ENCODE measurements at regions of chr6 and their contacts with region 1.

Region 1: DNA sequence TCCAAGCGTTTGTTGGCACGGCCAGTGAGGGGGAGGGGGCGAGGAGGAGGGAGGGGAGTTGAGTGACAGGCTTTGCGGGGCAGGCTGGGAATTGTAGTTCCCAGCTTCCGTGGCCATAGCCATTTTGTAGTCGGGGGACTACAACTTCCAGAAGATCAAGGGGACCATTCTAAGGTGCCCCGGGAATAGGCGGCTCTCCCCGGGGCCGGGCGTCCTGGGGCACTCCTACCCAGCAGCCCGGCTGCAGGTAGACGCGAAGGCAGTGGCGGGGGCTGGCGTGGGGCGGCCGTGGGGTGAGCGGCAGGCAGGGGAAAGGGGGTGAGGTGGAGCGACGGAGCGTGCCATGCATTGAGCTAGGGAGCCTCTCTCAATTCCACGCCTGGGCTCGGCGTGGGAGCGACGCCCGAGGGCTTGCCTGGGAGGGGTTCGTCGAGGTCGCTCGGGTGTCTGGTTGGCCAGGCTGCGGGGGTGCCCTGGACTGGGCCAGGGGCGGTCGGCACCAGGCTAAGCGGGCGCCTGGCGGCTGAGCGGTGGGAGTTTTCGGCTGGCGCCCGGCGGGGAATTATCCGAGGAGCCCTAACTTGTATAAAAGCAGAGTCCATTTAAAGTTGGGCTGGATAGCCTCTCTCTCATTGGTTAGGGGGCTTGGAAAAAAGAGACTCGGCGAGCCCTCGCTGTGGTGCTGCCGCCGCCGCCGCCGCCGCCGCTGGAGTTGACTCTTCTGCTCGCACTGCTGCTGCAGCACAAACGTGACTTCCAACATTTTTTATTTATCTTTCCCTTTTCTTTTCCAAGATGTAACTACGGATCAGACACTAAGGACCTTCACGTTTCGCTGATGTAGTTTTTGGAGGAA is at the start of gene JARID2:
- DNase-seq: peak; percentile 99 to 100 (median 99)
- ATAC-seq: peak; percentile 81 to 91 (median 90)
- H3K4me3 ChIP-seq: peak within 1 kb of the TSS; percentile 54 to 92 (median 82)
- H3K27ac ChIP-seq: peak within 1 kb of the TSS; percentile 76 to 98 (median 95)
- H3K4me1 ChIP-seq: peaks cover 0 to 38% (median 12%) of the 10 kb centered on the region in 12 donors
- H3K27me3 ChIP-seq: no peaks in the 10 kb centered on the region
- CTCF ChIP-seq: no peak
- POLR2A ChIP-seq: peak; percentile 74 to 95
- total RNA-seq, gene JARID2: 6.0 to 12.2 (median 8.5) TPM

Region 2: DNA sequence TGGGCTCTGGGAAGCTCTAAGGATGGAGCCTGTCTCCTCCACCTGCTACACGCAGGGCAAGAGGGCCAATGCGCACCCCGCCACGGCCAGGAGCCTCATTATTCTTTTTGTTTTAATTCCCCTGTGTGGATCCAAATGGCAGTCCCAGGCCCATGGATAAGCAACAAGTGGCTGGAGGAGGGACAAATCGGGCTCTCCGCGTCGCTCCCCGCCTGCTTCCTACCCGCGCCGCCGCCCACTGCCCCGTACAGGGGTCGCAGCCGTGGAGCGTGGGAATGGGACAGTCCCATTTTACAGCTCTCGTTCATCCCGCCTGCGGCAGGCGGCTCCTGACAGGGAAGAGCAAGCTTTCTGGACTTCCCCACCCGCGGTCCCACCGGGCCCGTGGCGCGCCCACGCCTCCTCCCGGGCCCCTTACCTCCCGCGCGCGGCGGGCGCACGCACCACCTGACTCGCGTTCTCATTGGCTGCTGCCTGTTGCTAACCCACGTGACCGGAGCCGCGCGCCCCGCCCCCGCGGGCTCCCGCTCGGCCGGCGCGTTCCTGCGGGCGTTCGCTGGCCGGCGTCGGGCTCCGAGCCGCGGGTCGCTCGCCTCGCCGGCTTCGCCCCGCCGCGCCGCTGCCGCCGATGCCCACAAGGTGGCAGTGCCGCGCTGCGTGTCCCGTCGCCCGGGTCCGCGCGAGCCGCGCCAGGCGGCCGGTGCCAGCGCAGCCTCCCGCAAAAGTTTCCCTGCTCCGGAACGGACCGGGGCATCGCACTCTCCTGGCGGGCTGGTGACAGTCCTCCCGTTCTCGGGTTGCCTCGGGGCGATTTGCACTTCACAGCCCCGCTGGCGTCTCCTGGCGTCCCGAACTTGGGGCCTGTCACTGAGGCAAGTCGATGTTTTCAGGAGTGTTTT is 1034.7 kb before region 1 on chr6:
- intact Hi-C with region 1: loop called in 7 of 10 experiments (anchors 1 to 10 kb)
- DNase-seq: peak; percentile 96 to 97 (median 96)
- ATAC-seq: peak; percentile 90 to 97 (median 95)
- H3K4me3 ChIP-seq: peak overlapping the region; percentile 53 to 90 (median 78)
- H3K27ac ChIP-seq: peak overlapping the region; percentile 82 to 95 (median 88)
- H3K4me1 ChIP-seq: peaks cover 0 to 23% (median 15%) of the 10 kb centered on the region in 12 donors
- H3K27me3 ChIP-seq: no peaks in the 10 kb centered on the region
- CTCF ChIP-seq: peak; percentile 28 to 98 (median 72)
- POLR2A ChIP-seq: peak in 1 of 2 donors; percentile 69

Region 3: GRCh38 chr6:14440940-14441781 is 804.4 kb before region 1 on chr6:
- intact Hi-C with region 1: loop called in 2 of 10 experiments (anchors 10 kb)
- DNase-seq: peak in 4 of 5 donors; percentile 36 to 58 (median 42)
- ATAC-seq: peak; percentile 93 to 94 (median 94)
- H3K4me3 ChIP-seq: peak overlapping the region in 6 of 12 donors; percentile 3 to 28 (median 12)
- H3K27ac ChIP-seq: peak overlapping the region; percentile 39 to 76 (median 68)
- H3K4me1 ChIP-seq: peaks cover 4 to 47% (median 26%) of the 10 kb centered on the region in 12 donors
- H3K27me3 ChIP-seq: no peaks in the 10 kb centered on the region
- CTCF ChIP-seq: no peak
- POLR2A ChIP-seq: no peak

Region 4: GRCh38 chr6:14816116-14816859 is 429.3 kb before region 1 on chr6:
- intact Hi-C with region 1: loop called in 1 of 10 experiments (anchors 10 kb)
- DNase-seq: no peak
- ATAC-seq: peak in 2 of 4 donors; percentile 23 to 32
- H3K4me3 ChIP-seq: no peak overlapping the region
- H3K27ac ChIP-seq: peak overlapping the region in 1 of 12 donors; percentile 1
- H3K4me1 ChIP-seq: peaks cover 0 to 6% (median 1%) of the 10 kb centered on the region in 12 donors
- H3K27me3 ChIP-seq: no peaks in the 10 kb centered on the region
- CTCF ChIP-seq: no peak
- POLR2A ChIP-seq: no peak

Region 5: DNA sequence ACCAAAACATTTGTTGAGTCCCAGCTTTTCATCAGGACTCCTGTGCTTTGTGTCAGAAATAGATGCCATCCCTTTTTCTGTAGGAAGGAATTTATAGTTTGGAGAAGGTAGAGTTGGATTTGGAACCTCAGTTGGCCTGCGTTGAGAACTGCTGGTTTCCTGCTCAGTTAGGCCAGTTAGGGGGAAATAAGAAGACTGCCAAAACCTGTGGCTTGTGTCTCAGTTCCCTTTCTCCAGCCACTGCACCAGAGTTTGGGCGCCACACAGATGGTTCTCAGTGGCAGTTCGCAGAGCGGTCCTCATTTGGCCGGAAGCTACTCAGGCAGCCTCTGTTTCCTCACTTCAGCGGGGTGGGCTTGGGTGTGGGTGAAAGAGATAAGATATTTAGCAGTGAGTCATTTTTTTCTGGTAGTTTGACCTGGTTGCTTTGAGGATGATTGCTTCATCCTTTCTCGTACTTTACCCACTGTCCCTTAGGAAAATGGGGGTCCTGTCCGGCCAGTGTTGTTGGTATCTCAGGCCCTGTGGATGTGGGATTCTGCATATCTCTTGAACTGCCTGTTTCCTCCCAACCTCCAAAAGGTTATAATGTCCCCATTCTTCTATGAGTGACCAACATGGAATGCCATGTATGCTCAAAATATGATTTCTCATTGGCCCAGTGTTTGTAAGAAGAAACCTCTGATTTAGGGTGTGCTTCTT is 54.0 kb after region 1 on chr6:
- intact Hi-C with region 1: loop called in 1 of 10 experiments (anchors 5 kb)
- DNase-seq: peak; percentile 32 to 71 (median 53)
- ATAC-seq: peak in 3 of 4 donors; percentile 54 to 74 (median 67)
- H3K4me3 ChIP-seq: no peak overlapping the region
- H3K27ac ChIP-seq: peak overlapping the region in 1 of 12 donors; percentile 75
- H3K4me1 ChIP-seq: peaks cover 0 to 69% (median 56%) of the 10 kb centered on the region in 12 donors
- H3K27me3 ChIP-seq: no peaks in the 10 kb centered on the region
- CTCF ChIP-seq: no peak
- POLR2A ChIP-seq: no peak

Region 6: GRCh38 chr6:15441215-15441868 is 195.8 kb after region 1 on chr6:
- intact Hi-C with region 1: loop called in 6 of 10 experiments (anchors 5 kb)
- DNase-seq: peak in 3 of 5 donors; percentile 35 to 42 (median 37)
- ATAC-seq: peak in 3 of 4 donors; percentile 71 to 75 (median 74)
- H3K4me3 ChIP-seq: no peak overlapping the region
- H3K27ac ChIP-seq: no peak overlapping the region
- H3K4me1 ChIP-seq: peaks cover 3 to 87% (median 60%) of the 10 kb centered on the region in 12 donors
- H3K27me3 ChIP-seq: no peaks in the 10 kb centered on the region
- CTCF ChIP-seq: peak; percentile 67 to 92 (median 82)
- POLR2A ChIP-seq: no peak

Region 7: GRCh38 chr6:15621203-15622044 is 375.8 kb after region 1 on chr6:
- intact Hi-C with region 1: loop called in 6 of 10 experiments (anchors 5 to 10 kb)
- DNase-seq: peak; percentile 58 to 72 (median 68)
- ATAC-seq: peak; percentile 81 to 95 (median 91)
- H3K4me3 ChIP-seq: no peak overlapping the region
- H3K27ac ChIP-seq: peak overlapping the region; percentile 50 to 87 (median 78)
- H3K4me1 ChIP-seq: peaks cover 0 to 40% (median 31%) of the 10 kb centered on the region in 12 donors
- H3K27me3 ChIP-seq: no peaks in the 10 kb centered on the region
- CTCF ChIP-seq: peak in 1 of 12 donors; percentile 8
- POLR2A ChIP-seq: no peak

Measured in heart left ventricle (tissue), 16 donors.